ENCODE measurements at regions of chr7 and their contacts with region 1.

Region 1: GRCh38 chr7:39252916-39253315 is 275.2 kb downstream of the POU6F2 start:
- DNase-seq: no peak
- H3K4me3 ChIP-seq: no peak overlapping the region
- H3K27ac ChIP-seq: no peak overlapping the region
- H3K4me1 ChIP-seq: no peaks in the 10 kb centered on the region
- H3K27me3 ChIP-seq: no peaks in the 10 kb centered on the region
- CTCF ChIP-seq: no peak
- POLR2A ChIP-seq: no peak

Region 2: DNA sequence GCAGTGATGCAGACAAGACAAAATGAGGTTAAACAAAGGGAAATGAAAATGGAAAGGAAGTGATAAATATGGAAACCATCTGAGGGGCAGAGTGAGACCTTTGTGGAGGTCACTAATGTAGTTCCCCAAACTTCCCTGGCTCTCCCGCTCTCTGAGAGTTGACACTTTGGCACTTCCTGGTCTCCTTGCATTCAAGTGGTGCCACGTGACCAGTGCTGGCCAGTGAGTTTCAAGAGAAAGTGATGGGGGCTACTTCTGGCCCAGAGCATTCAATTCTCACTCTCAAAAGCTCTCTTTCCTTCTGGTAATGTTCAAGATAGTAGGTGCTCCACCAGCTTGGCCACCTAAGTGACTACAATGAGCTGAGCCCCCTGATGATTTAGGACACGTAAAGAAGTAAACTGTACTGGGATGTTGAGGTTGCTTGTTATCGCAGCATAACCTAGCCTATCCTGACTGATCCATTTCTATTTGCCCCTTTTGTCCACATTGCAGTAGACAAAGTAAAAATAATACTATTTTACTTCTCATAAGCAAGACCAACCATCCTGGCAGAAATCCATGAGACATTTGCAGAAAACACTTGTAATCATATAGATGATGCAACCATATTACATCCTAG is 71.3 kb after region 1 on chr7:
- intact Hi-C with region 1: loop called (anchors 2 kb)
- DNase-seq: no peak
- H3K4me3 ChIP-seq: no peak overlapping the region
- H3K27ac ChIP-seq: no peak overlapping the region
- H3K4me1 ChIP-seq: no peaks in the 10 kb centered on the region
- H3K27me3 ChIP-seq: no peaks in the 10 kb centered on the region
- CTCF ChIP-seq: no peak
- POLR2A ChIP-seq: no peak

Measured in breast epithelium (tissue), 4 donors.